ENCODE measurements at regions of chr2 and their contacts with region 1.

Region 1: DNA sequence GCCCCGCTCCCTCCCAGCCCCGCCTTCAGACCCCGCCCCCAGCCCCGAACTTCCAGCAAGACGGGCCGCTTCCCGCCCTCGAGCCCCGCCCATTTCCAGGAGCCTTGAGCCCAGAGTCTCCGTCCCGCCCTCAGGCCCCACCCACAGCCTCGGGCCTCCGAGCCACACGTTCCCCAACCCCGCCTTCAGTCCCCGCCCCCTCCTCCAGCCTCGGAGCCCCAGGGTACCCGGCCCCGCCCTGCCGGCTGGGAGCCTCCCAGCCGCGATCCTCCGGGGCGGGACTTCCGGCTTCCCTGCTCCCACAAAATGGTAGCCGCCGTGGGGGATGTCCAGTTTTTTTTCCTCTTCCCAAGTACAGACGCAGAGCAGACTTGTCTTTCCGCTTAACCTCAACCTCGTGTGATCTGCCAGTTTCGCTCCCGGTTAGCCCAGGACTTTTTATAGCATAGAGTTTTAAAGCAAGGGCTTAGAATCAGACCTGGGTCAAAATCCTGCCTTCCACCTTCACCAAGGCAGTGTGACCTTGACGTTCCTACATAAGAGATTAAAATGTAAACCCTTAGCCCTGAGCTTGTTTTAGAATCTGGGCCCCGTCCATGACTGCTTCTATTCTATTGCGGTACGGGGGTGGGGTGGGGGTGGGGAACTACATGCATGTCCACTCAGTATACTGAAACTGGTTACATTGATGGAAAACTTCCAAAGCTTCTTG is 435 bp upstream of the GPR155 start:
- DNase-seq: peak; percentile 94 to 100 (median 98)

Region 2: DNA sequence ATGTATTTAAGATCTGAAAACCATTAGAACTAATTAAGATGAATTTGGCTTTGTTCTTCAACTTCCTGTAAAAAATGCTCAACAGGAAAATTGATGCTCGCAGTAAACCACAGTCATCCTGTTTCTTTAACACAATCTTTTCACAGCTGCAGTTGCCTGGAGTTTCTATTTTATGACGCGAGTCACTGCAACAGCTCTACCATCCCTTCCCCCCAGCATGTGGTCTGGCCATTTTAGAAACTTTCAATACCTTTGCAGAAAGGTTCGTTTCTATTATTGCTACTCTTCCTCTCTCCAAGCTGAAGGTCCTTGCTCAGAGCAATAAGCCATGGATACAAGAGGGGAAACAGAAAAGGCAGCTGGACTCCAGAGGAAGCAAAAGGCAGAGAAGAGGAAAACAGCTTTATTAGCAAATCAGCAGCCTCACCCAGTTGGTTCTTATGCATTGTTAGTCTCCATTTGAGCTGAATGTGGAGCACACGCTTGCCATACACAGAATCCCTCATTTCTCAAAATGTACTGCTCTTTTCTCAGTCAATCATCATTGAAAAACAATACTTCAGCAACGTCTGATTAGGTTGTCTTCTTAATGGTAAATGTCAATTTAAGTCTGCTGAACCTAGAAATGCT is 106.4 kb after region 1 on chr2:
- intact Hi-C with region 1: loop called (anchors 10 kb)
- DNase-seq: peak in 8 of 42 donors; percentile 24 to 54 (median 41)

Region 3: DNA sequence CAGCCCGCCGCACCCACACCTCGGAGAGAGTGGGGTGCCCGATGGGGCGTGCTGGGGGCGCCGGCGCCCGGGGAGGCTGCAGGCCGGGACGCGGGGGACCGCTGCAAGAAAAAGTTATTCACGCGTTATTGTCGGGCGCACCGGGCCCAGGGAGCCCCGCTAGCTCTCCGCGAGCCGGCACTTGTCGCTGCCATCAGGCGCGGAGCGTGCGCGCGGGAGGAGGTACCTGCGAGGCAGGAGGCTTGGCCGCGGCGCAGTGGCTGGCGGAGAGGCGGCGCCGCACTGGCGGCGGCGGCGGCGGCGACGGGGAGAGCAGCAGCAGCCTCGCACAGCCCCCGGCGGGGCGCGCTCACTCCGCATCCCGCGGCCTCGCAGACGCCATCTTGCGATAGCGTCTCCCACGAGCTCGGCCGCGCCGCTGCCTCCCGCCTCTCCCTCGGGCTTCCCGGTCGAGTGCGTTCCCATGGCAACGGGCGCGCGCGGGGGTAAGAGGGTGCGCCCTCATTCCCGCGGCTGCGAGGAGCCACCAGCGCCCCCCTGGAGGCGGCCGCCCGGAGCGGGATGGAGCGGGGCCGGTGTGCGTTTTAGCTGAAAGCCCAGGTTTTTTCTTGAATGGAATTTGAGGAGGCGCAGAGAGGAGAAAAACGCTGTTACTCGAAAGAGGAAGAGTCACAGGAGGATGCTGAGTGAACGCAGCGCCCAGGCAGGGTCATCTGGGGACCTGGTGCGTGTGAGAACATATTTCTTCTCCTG is 517.9 kb after region 1 on chr2 and contains the start of gene CHN1:
- intact Hi-C with region 1: loop called (anchors 10 kb)
- DNase-seq: peak; percentile 72 to 97 (median 93)

Measured in head of caudate nucleus (tissue), 42 donors.